Upper lobe of right lung (tissue), 1 donor: ENCODE measurements at regions of chr11 and their contacts with region 1.

Region 1: DNA sequence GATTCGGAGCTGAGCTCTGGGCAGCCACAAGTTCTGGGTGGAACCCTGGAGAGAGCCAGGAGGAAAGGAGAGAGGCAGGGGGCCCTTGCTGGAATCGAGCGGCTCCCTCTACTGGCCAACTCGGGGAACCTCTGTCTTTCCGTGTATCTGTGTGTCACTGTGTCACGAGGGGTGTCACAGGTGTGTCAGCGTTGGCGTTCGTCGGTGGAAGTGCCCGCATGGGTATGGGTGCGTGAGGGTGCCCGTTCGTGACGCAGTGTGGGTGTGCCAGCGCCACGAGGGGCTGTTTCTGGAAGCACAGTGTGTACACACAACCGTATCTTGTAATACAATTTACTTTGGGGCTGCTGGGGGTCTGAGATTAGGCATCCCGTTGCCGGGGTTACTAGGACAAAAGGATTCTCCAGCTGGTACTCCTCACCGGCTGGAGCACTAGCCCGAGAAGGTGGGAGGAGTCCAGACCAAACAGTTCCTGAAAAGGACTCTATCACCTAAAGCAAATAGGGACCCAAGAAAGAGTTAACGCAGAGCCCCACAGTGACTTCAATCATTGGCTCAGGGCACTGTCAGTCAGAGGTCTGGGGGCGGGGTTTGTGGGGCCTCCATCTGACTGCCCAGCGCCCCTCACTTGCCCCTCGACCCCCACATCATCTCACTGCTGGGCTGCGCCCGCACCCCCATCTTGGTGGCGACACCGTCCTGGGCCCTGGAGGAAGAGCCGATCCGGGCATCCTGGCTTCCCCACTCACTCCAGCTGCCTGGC is 2.6 kb upstream of the BCL9L start:
- DNase-seq: peak; percentile 92
- ATAC-seq: peak; percentile 77
- H3K4me3 ChIP-seq: peak overlapping the region; percentile 87
- H3K27ac ChIP-seq: peak overlapping the region; percentile 94
- H3K4me1 ChIP-seq: peaks cover 18% of the 10 kb centered on the region
- H3K27me3 ChIP-seq: no peaks in the 10 kb centered on the region
- CTCF ChIP-seq: peak; percentile 90

Region 2: DNA sequence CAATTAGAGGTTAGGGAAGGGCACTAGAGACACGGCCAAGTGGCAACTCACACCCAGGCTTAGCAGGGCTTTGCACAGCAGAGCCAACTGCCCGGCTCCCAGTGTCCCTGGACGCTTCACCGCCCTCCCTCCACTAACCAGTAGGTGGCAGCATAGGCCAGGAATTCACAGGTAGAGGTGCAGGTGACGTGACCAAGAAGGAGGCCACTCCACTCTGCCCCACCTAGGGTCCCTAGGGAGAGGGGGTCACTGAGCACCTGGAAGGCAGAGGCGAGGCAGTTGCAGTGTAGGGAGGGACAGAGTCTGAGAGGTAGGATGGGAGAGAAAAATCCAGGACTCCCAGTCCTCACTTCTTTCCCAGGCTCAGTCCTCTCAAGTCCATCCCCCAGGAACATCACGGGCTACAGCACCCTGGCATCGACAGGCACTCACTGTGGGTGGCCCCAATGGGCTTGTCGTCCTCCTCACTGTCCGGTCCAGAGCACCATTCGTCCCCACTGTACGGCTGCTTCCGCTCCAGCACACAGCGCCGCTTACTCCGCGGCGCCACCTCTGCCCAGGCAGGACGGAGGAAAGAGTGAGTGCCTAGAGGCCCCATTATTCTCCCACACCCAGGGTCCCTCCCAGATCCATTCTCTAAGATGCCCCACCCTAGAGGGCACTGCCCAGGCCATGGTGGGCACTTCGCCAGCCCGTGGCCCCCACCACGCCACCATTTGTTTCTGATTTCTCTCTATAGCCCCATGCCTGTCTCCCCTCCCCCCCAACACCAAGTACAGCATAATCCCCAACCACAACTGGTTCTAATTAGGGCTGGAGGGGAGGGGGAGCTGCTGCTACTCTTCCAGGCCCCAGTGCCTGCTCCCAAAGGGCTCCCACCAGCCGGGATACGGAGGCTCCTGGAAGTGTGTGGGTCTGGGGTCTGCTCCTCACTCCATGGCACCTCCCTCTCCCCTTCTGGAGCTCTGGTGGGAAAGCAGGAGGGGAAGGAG is 20.9 kb before region 1 on chr11:
- intact Hi-C with region 1: loop called (anchors 2 kb)
- DNase-seq: peak; percentile 89
- ATAC-seq: peak; percentile 81
- H3K4me3 ChIP-seq: no peak overlapping the region
- H3K27ac ChIP-seq: no peak overlapping the region
- H3K4me1 ChIP-seq: peaks cover 51% of the 10 kb centered on the region
- H3K27me3 ChIP-seq: no peaks in the 10 kb centered on the region
- CTCF ChIP-seq: peak; percentile 96